ENCODE measurements at regions of chr10 and their contacts with region 1.

Region 1: GRCh38 chr10:34666008-34666705 is 148.9 kb downstream of the PARD3 start:
- DNase-seq: peak; percentile 66 to 84
- H3K4me3 ChIP-seq: no peak overlapping the region
- H3K27ac ChIP-seq: peak overlapping the region; percentile 74
- H3K4me1 ChIP-seq: peaks cover 25% of the 10 kb centered on the region
- H3K27me3 ChIP-seq: no peaks in the 10 kb centered on the region
- CTCF ChIP-seq: peak; percentile 72

Region 2: DNA sequence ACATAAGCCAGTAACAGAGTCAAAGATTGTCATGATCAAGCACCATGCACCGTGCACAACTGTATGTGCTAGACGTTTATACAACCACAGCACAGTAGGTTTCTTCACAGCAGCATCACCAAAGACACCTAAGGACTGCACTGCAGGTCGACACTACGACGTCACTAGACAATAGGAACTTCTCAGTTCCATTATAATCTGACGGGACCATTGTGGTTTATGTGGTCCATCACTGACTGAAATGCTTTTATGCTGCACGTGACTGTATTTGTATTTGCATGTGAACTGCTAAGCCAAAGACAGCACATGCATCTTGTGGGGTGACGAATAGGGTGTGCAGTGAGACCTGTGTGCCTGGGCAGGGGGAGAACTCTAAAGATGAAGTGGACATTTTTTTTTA is 16.0 kb before region 1 on chr10:
- CTCF ChIA-PET with region 1: no interaction called
- POLR2A ChIA-PET with region 1: no interaction called
- intact Hi-C with region 1: no loop called
- DNase-seq: no peak
- H3K4me3 ChIP-seq: no peak overlapping the region
- H3K27ac ChIP-seq: no peak overlapping the region
- H3K4me1 ChIP-seq: peaks cover 7% of the 10 kb centered on the region; the same call in 1 of the 2 replicates
- H3K27me3 ChIP-seq: no peaks in the 10 kb centered on the region
- CTCF ChIP-seq: no peak

Region 3: DNA sequence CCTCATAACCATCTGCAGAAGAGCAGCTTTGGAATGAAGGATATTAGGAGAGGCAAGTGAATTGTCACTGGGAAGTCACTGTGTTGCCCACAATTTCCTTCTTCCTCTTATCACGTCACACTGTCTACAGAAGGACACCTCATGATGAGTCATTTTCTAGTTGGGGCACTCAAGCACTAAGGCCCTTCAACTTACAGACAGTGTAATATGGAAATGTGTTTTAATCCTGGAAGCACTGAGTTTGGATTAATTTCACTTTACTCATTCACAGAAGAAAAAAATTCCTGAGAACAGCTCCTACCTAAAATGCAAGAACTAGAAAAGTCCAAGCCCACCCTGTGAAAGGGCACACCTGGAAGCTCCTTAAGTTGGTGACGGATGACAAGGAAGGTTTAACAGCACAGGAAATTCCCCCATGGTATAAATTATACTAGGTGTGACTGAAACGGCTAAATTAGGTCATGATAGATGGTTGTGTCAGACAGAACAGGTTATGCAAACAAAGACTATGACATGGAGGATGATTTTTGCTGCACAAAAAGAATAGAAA is 92.4 kb after region 1 on chr10:
- CTCF ChIA-PET with region 1: no interaction called
- POLR2A ChIA-PET with region 1: no interaction called
- intact Hi-C with region 1: loop called (anchors 5 kb)
- DNase-seq: peak; percentile 52 to 94
- H3K4me3 ChIP-seq: no peak overlapping the region
- H3K27ac ChIP-seq: peak overlapping the region; percentile 82
- H3K4me1 ChIP-seq: peaks cover 20% of the 10 kb centered on the region
- H3K27me3 ChIP-seq: no peaks in the 10 kb centered on the region
- CTCF ChIP-seq: no peak

Region 4: GRCh38 chr10:34889004-34889869 is 223.1 kb after region 1 on chr10:
- CTCF ChIA-PET with region 1: no interaction called
- POLR2A ChIA-PET with region 1: no interaction called
- intact Hi-C with region 1: loop called (anchors 1 kb)
- DNase-seq: peak; percentile 73 to 76
- H3K4me3 ChIP-seq: no peak overlapping the region
- H3K27ac ChIP-seq: peak overlapping the region; percentile 34; the same call in 1 of the 2 replicates
- H3K4me1 ChIP-seq: peaks cover 4% of the 10 kb centered on the region
- H3K27me3 ChIP-seq: no peaks in the 10 kb centered on the region
- CTCF ChIP-seq: no peak

Region 5: GRCh38 chr10:34994565-34995142 is 328.5 kb after region 1 on chr10:
- CTCF ChIA-PET with region 1: no interaction called
- POLR2A ChIA-PET with region 1: no interaction called
- intact Hi-C with region 1: loop called (anchors 5 kb)
- DNase-seq: peak; percentile 69 to 80
- H3K4me3 ChIP-seq: no peak overlapping the region
- H3K27ac ChIP-seq: no peak overlapping the region
- H3K4me1 ChIP-seq: peaks cover 28% of the 10 kb centered on the region
- H3K27me3 ChIP-seq: no peaks in the 10 kb centered on the region
- CTCF ChIP-seq: peak; percentile 78

Region 6: GRCh38 chr10:35218339-35218955 is 552.3 kb after region 1 on chr10:
- CTCF ChIA-PET with region 1: no interaction called
- POLR2A ChIA-PET with region 1: no interaction called
- intact Hi-C with region 1: loop called (anchors 1 kb)
- DNase-seq: peak; percentile 56 to 66
- H3K4me3 ChIP-seq: no peak overlapping the region
- H3K27ac ChIP-seq: no peak overlapping the region
- H3K4me1 ChIP-seq: no peaks in the 10 kb centered on the region
- H3K27me3 ChIP-seq: no peaks in the 10 kb centered on the region
- CTCF ChIP-seq: peak; percentile 83